ENCODE measurements at regions of chr16 and their contacts with region 1.

Region 1: DNA sequence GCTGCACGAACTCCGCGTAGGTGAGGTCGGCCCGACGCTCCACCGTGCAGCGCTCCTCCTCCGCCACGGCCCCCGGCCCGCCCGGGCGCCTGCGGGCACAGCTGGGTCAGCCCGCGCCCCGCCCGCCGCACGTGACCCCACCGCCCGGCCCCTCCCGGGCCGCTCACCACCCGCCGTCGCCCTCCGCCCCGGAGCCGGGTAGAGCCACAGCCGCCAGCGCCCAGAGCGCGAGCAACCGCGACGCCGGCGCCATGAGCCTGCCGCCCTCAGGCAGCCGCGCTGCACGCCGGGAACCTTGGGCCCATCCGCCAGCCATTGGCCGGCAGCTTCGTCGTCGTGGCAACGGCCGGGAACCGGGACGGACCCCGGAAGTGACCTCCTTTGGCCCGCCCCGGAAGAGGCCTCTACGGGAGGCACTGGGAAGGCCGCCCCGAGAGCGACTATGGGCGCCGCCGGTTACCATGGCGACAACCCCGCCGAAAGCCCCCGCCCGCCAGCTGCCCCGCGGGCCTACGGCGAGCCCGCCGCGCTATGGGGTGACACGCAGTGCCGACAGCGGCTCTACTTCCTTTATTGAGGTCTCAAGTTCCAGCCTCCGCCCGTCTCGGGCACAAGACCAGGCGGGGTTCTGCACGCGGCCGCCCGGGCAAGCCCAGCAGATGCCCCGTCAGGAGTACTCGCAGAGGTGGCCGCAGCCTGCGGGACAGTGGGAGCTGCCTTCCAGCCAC is at the start of gene JMJD8:
- DNase-seq: peak; percentile 81 to 98
- H3K4me3 ChIP-seq: peak within 1 kb of the TSS; percentile 62 to 81 (median 74)
- H3K27ac ChIP-seq: peak within 1 kb of the TSS; percentile 73
- H3K4me1 ChIP-seq: peaks cover 0 to 18% (median 13%) of the 10 kb centered on the region in 4 experiments; a peak in 5 of 7 replicates
- H3K27me3 ChIP-seq: no peaks in the 10 kb centered on the region; a peak in 1 of 7 replicates
- CTCF ChIP-seq: no peak
- EP300 ChIP-seq: no peak
- POLR2A ChIP-seq: peak in 1 of 2 experiments; percentile 92; a peak in 2 of 3 replicates
- RAD21 ChIP-seq: no peak
- total RNA-seq, gene JMJD8: 46.4 and 49.0 TPM in 2 replicates

Region 2: GRCh38 chr16:667780-668518 is 16.3 kb before region 1 on chr16 and contains the start of gene RHOT2:
- CTCF ChIA-PET with region 1: interaction called, 75 read pairs
- POLR2A ChIA-PET with region 1: interaction called, 214 read pairs
- DNase-seq: peak; percentile 47 to 94
- H3K4me3 ChIP-seq: peak within 1 kb of the TSS; percentile 71 to 89 (median 76)
- H3K27ac ChIP-seq: peak within 1 kb of the TSS; percentile 23; the same call in 1 of the 2 replicates
- H3K4me1 ChIP-seq: peaks cover 0 to 8% (median 5%) of the 10 kb centered on the region in 4 experiments; a peak in 5 of 7 replicates
- H3K27me3 ChIP-seq: no peaks in the 10 kb centered on the region
- CTCF ChIP-seq: peak in 2 of 3 experiments; percentile 85 to 99; a peak in 3 of 4 replicates
- EP300 ChIP-seq: peak in 1 of 2 experiments; percentile 82; a peak in 1 of 3 replicates
- POLR2A ChIP-seq: no peak; a peak in 1 of 3 replicates
- RAD21 ChIP-seq: peak; percentile 34 to 65; a peak in 3 of 4 replicates
- total RNA-seq, gene RHOT2: 149 and 162 TPM in 2 replicates

Region 3: GRCh38 chr16:695355-696089 is 11.3 kb after region 1 on chr16:
- CTCF ChIA-PET with region 1: interaction called, 15 read pairs
- POLR2A ChIA-PET with region 1: interaction called, 48 read pairs
- DNase-seq: peak in 1 of 2 experiments; percentile 77
- H3K4me3 ChIP-seq: peak overlapping the region; percentile 47 to 73 (median 52)
- H3K27ac ChIP-seq: no peak overlapping the region
- H3K4me1 ChIP-seq: peaks cover 0 to 13% (median 9%) of the 10 kb centered on the region in 4 experiments; a peak in 4 of 7 replicates
- H3K27me3 ChIP-seq: peaks cover 8 to 76% (median 53%) of the 10 kb centered on the region in 4 experiments
- CTCF ChIP-seq: no peak
- EP300 ChIP-seq: no peak
- POLR2A ChIP-seq: no peak
- RAD21 ChIP-seq: no peak

Region 4: DNA sequence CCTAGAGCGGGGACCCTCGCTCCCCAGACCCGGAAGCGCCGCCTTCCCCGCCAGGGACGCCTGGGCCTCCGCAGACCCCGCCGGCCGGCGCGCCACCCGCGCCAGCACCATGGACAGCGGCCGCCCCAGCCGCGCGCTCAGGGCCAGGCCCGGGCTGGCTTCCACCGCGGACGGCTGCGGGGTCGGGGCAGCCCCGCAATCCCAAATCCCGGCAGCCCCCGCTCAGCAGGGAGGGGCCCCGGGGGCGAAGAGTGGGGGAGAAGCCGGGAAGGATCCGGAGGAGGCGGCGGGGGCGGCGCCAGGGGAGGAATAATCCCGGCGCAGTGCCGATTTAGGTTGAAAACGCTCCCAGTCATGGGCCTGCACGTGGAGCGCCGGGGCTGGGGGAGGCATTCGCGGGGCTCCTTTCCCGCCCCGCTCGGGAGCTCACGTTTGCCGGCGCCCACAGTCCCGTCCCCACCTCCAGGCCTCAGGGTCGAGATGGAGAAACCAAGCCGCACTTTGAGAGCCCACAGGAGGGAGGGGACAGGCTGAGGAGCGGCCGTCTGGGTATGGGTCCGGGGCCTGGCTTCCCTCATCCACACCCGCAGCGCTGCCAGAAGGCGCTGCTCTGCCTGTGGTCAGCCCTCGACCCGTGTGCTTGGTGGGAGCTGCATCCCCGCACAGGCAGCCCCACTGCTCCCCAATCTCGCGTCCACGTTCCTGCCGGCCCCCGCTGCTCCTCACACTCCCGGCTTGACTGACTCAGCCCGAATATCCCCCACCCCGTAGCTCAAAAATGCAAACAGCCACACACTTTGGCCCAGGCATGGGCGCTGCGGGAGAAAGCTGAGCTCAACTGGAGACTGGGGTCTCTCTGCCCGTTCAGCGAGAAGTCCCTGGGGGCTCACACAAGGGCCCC is 16.7 kb after region 1 on chr16:
- CTCF ChIA-PET with region 1: interaction called, 15 read pairs
- POLR2A ChIA-PET with region 1: interaction called, 48 read pairs
- DNase-seq: peak in 1 of 2 experiments; percentile 92
- H3K4me3 ChIP-seq: peak overlapping the region in 1 of 4 experiments; percentile 33; a peak in 2 of 8 replicates
- H3K27ac ChIP-seq: no peak overlapping the region
- H3K4me1 ChIP-seq: peaks cover 0 to 6% (median 1%) of the 10 kb centered on the region in 4 experiments; a peak in 3 of 7 replicates
- H3K27me3 ChIP-seq: peaks cover 45 to 80% (median 72%) of the 10 kb centered on the region in 4 experiments
- CTCF ChIP-seq: 0 out of 4 replicates have a peak, but pooled peaks of 1 of the 3 experiments have one; percentile 3
- EP300 ChIP-seq: no peak
- POLR2A ChIP-seq: no peak
- RAD21 ChIP-seq: peak in 1 of 2 experiments; percentile 1; a peak in 1 of 4 replicates

Region 5: GRCh38 chr16:728131-728889 is 44.1 kb after region 1 on chr16:
- CTCF ChIA-PET with region 1: interaction called, 4 read pairs
- POLR2A ChIA-PET with region 1: interaction called, 13 read pairs
- DNase-seq: no peak
- H3K4me3 ChIP-seq: peak overlapping the region; percentile 24 to 83 (median 37)
- H3K27ac ChIP-seq: no peak overlapping the region; the same call in 1 of the 2 replicates
- H3K4me1 ChIP-seq: peaks cover 0 to 14% (median 8%) of the 10 kb centered on the region in 4 experiments; a peak in 5 of 7 replicates
- H3K27me3 ChIP-seq: peaks cover 0 to 16% (median 5%) of the 10 kb centered on the region in 4 experiments; a peak in 4 of 7 replicates
- CTCF ChIP-seq: no peak
- EP300 ChIP-seq: no peak
- POLR2A ChIP-seq: 0 out of 3 replicates have a peak, but pooled peaks of 1 of the 2 experiments have one; percentile 15
- RAD21 ChIP-seq: no peak

Region 6: GRCh38 chr16:825341-826061 is 141.3 kb after region 1 on chr16:
- CTCF ChIA-PET with region 1: no interaction called
- POLR2A ChIA-PET with region 1: no interaction called
- DNase-seq: no peak
- H3K4me3 ChIP-seq: no peak overlapping the region
- H3K27ac ChIP-seq: no peak overlapping the region
- H3K4me1 ChIP-seq: peaks cover 0 to 14% (median 0%) of the 10 kb centered on the region in 4 experiments; a peak in 2 of 7 replicates
- H3K27me3 ChIP-seq: no peaks in the 10 kb centered on the region
- CTCF ChIP-seq: no peak
- EP300 ChIP-seq: no peak
- POLR2A ChIP-seq: no peak
- RAD21 ChIP-seq: no peak